IMR-90 (cell line): ENCODE measurements at regions of chr1 and their contacts with region 1.

Region 1: DNA sequence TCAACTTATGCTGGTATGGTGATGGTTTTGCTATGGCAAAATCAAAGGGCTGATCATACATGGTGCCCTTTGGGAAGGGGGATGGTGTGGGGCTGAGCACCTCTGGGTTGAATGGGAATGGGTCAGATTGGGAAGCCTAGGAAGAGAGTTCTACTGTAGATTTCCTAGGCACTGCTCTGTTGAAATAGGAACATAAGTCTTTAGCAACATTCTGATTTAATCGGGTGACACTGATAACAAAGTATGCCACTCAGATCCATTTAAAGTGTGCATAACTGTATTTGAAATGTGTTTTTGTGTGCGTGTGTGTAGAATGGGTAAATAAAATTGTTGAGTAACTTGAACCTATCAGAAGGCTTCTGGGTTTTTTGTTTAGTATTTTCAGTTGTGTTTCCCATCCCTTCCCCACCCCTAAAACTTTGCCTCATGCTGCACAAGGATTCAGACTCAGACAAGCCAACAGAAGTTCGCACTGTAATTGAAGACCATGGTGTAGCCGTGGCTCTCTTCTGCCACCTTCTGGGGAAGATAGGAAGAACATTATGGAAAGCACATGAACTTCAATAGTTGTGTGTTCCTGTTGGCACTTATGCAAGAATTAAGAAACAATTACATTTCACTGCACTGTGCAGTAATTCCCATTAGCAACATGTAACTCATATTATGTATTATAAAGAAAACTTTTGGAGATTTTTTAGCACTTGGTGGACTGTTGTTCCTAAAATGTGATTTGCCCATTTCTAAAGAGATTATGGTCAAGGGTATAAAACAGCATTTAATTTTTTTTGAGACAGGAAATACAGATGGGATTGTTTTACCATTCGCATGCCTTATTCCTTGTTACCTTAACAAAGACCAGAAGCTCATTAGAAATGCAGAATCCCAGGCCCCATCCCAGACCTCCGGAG is 10.9 kb upstream of the C4BPB start:
- DNase-seq: peak; percentile 77
- ATAC-seq: peak; percentile 99
- H3K4me3 ChIP-seq: no peak overlapping the region
- H3K27ac ChIP-seq: no peak overlapping the region
- H3K4me1 ChIP-seq: no peaks in the 10 kb centered on the region
- H3K27me3 ChIP-seq: peaks cover 6% of the 10 kb centered on the region
- CTCF ChIP-seq: peak; percentile 91
- POLR2A ChIP-seq: no peak
- RAD21 ChIP-seq: peak; percentile 89

Region 2: DNA sequence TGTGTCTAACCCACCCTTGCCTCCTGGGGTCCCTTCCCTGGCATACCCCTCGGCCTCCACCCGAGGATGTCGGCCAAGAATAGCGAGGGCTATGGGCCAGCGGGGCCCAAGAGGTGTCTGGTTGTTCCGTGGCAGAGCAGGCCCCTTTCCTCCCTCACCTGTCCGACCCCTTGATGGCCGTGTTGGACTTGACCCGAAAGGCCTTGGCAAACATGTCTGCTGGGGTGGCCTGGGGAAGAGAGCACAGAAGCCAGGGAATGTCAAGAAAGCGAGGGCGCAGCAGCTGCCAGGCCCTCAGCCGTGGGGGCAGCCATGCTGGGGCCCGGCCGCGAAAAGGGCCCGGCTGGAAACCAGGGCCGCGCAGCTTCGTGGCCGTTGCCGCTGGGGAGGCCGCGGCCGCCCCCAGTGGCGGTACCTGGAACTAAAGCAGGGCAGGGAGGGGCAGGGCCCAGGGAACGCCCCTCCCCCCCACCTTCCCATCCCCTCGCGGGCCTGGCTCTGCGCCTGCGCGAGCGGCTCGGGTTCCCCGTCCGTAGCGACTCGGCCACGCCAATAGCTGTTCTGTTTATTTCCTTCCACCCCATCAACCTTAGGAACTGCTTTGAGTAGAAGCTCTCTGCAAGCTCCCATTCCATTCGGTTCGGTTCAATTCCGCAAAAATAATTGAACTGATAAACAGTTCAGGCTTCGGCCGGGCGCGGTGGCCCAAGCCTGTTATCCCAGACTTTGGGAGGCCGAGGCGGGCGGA is 465.4 kb before region 1 on chr1 and contains the start of gene EIF2D:
- CTCF ChIA-PET with region 1: no interaction called
- POLR2A ChIA-PET with region 1: no interaction called
- dilution Hi-C with region 1: no loop called
- in situ Hi-C with region 1: no loop called
- intact Hi-C with region 1: loop called (anchors 5 kb)
- DNase-seq: peak; percentile 87
- ATAC-seq: peak; percentile 100
- H3K4me3 ChIP-seq: peak within 1 kb of the TSS; percentile 71
- H3K27ac ChIP-seq: peak within 1 kb of the TSS; percentile 96
- H3K4me1 ChIP-seq: peaks cover 4% of the 10 kb centered on the region
- H3K27me3 ChIP-seq: peaks cover 4% of the 10 kb centered on the region; the same call in 1 of the 2 replicates
- CTCF ChIP-seq: peak; percentile 99
- POLR2A ChIP-seq: peak; percentile 97
- RAD21 ChIP-seq: peak; percentile 61
- total RNA-seq, gene EIF2D: 51.7 and 69.4 TPM in 2 replicates

Region 3: DNA sequence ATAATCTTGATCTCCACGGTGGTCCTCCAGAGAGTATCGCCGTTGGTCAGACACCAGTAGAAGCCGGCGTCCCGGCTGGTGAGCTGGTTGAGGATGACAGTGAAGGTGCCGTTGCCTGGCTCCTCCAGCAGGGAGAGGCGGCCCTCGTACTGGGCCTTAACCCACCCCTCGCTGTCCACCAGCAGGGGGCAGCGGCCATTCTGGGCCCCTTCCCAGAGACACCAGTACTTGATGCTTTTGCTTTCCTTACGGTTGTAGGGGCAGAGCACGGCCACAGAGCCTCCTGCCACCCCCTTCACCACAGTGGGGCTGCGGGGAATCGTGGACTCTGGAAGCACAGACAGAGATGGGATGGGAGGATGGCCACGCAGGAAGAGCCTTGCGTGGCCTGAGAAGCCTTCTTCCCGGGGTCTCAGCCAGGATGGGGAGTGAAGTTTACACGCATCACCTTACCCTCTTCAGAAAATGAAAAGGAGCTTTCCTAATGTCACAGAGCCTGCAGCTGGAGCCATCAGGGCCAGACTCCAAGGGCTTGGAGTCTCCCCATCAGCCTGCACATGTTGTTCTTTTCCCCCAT is 142.1 kb before region 1 on chr1:
- CTCF ChIA-PET with region 1: no interaction called
- POLR2A ChIA-PET with region 1: no interaction called
- dilution Hi-C with region 1: no loop called
- in situ Hi-C with region 1: no loop called
- intact Hi-C with region 1: loop called (anchors 5 kb)
- DNase-seq: peak; percentile 7
- ATAC-seq: peak; percentile 40; the same call in 1 of the 2 replicates
- H3K4me3 ChIP-seq: no peak overlapping the region
- H3K27ac ChIP-seq: no peak overlapping the region
- H3K4me1 ChIP-seq: no peaks in the 10 kb centered on the region
- H3K27me3 ChIP-seq: peaks cover 26% of the 10 kb centered on the region
- CTCF ChIP-seq: peak; percentile 61
- POLR2A ChIP-seq: no peak
- RAD21 ChIP-seq: peak; percentile 46

Region 4: DNA sequence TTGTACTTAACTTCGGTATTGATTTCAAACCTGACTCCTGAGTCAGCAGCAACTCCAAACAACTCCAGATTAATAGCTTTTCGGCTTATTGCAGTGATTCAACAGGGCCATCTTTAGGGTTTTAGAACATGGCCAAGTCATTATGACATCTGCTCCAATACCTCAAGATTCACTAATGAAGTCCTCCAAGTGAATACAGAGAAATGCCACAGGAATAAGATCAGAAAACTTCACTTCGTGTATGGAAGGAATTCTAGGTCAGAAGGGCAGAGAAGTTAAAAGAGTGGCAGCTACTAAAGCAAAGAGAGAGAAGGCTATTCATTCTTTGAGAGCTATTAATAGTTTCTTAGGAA is 37.6 kb before region 1 on chr1:
- CTCF ChIA-PET with region 1: no interaction called
- POLR2A ChIA-PET with region 1: no interaction called
- dilution Hi-C with region 1: no loop called
- in situ Hi-C with region 1: no loop called
- intact Hi-C with region 1: no loop called
- DNase-seq: peak; percentile 43
- ATAC-seq: peak; percentile 60
- H3K4me3 ChIP-seq: no peak overlapping the region
- H3K27ac ChIP-seq: no peak overlapping the region
- H3K4me1 ChIP-seq: peaks cover 2% of the 10 kb centered on the region
- H3K27me3 ChIP-seq: no peaks in the 10 kb centered on the region
- CTCF ChIP-seq: no peak
- POLR2A ChIP-seq: no peak
- RAD21 ChIP-seq: no peak

Region 5: GRCh38 chr1:207050768-207051614 is 26.7 kb before region 1 on chr1 and contains the start of gene YOD1:
- CTCF ChIA-PET with region 1: interaction called, 5 read pairs
- POLR2A ChIA-PET with region 1: no interaction called
- dilution Hi-C with region 1: no loop called
- in situ Hi-C with region 1: no loop called
- intact Hi-C with region 1: loop called (anchors 2 kb)
- DNase-seq: peak; percentile 88
- ATAC-seq: peak; percentile 75
- H3K4me3 ChIP-seq: peak within 1 kb of the TSS; percentile 97
- H3K27ac ChIP-seq: peak within 1 kb of the TSS; percentile 78
- H3K4me1 ChIP-seq: peaks cover 4% of the 10 kb centered on the region; the same call in 1 of the 2 replicates
- H3K27me3 ChIP-seq: peaks cover 7% of the 10 kb centered on the region
- CTCF ChIP-seq: no peak
- POLR2A ChIP-seq: peak; percentile 81; the same call in 1 of the 2 replicates
- RAD21 ChIP-seq: no peak
- total RNA-seq, gene YOD1: 5.4 and 10.3 TPM in 2 replicates

Region 6: GRCh38 chr1:207499573-207499972 is 421.8 kb after region 1 on chr1:
- CTCF ChIA-PET with region 1: interaction called, 4 read pairs
- POLR2A ChIA-PET with region 1: no interaction called
- dilution Hi-C with region 1: no loop called
- in situ Hi-C with region 1: no loop called
- intact Hi-C with region 1: loop called (anchors 2 kb)
- DNase-seq: peak; percentile 59
- ATAC-seq: peak; percentile 93
- H3K4me3 ChIP-seq: no peak overlapping the region
- H3K27ac ChIP-seq: no peak overlapping the region
- H3K4me1 ChIP-seq: no peaks in the 10 kb centered on the region
- H3K27me3 ChIP-seq: peaks cover 24% of the 10 kb centered on the region
- CTCF ChIP-seq: peak; percentile 74
- POLR2A ChIP-seq: no peak
- RAD21 ChIP-seq: peak; percentile 81